ENCODE measurements at regions of chr9 and their contacts with region 1.

Region 1: DNA sequence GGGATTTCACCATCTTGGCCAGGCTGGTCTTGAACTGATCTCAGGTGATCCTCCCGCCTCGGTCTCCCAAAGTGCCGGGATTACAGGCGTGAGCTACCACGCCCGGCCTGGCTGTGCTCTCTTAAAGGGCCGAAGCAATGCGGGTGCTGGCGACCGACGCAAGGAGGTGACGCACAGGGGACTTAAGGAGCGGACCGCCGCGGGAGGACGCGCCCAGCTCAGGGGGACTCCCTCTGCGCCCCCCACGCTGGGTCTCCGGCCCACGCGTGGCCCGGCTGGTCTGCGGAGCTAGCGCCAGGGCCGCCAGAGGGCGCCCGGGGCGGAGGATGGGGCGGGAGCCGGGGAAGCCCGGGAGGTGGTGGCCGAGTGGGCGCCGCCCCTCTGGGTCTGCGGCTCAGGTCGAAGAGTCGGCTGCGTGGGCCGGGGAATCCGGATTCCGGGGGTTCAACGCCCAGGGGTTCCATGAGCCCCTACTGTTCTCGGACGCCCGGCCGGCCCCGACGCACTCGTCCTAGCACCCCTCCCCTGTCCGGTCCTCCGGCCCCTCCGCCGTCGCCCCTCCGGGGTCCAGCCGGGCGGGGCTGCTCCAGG is 502 bp upstream of the CERCAM start:
- DNase-seq: no peak
- ATAC-seq: peak; percentile 93
- H3K4me3 ChIP-seq: peak overlapping the region; percentile 93
- H3K27ac ChIP-seq: no peak overlapping the region
- H3K4me1 ChIP-seq: peaks cover 10% of the 10 kb centered on the region
- H3K27me3 ChIP-seq: peaks cover 7 to 11% of the 10 kb centered on the region in 2 experiments
- CTCF ChIP-seq: peak; percentile 77 to 90 (median 84); a peak in 5 of 6 replicates
- EP300 ChIP-seq: no peak
- POLR2A ChIP-seq: no peak
- RAD21 ChIP-seq: peak; percentile 29; the same call in 1 of the 2 replicates

Region 2: GRCh38 chr9:128370826-128371621 is 49.1 kb before region 1 on chr9 and contains the start of gene URM1:
- CTCF ChIA-PET with region 1: interaction called, 8 read pairs
- POLR2A ChIA-PET with region 1: interaction called, 8 read pairs
- RAD21 ChIA-PET with region 1: interaction called, 11 read pairs
- SMC1A ChIA-PET with region 1: interaction called, 4 read pairs
- in situ Hi-C with region 1: no loop called
- intact Hi-C with region 1: no loop called
- DNase-seq: peak; percentile 73
- ATAC-seq: peak; percentile 98
- H3K4me3 ChIP-seq: peak within 1 kb of the TSS; percentile 99
- H3K27ac ChIP-seq: peak within 1 kb of the TSS; percentile 89
- H3K4me1 ChIP-seq: no peaks in the 10 kb centered on the region
- H3K27me3 ChIP-seq: no peaks in the 10 kb centered on the region
- CTCF ChIP-seq: peak in 1 of 3 experiments; percentile 9; a peak in 1 of 6 replicates
- EP300 ChIP-seq: no peak
- POLR2A ChIP-seq: peak; percentile 90
- RAD21 ChIP-seq: no peak
- polyA plus RNA-seq, gene URM1: 7.9 to 14.1 TPM

Region 3: DNA sequence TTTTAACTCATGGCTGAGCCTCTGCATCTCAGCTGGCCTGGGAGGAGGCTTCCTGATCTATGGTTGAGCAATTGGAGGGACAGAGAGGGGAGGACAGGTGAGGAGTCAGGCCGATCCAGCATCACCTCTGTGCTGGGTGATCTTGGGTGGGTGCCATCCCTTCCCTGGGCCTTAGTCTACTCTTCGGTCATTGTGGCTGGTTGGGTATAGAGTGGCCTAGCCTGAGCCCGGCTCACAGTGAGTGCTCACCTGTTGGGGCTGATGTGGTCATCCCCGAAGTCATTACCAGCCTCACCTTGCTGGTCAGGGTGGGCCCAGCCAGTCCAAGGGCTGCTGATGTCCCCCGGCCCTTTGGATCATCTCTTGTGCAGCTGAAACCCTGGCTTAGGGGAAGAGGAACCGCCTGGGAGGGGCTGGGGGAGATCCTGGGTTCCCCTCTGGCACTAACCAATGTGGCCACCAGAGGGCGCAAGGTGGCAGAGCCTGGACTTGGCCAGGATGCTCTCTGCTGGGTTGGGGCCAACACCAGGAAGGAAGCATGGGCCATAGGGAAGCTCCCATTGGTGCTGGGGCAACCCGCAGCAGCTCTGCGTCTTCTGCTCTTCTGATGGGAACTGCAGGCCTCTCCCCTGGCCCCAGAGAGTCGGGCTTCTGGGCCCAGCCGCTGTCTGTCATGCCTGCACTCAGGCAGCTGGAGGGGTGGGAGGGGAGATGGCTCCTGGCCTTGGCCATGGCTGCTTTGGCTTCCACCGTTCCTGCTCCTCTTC is 18.4 kb after region 1 on chr9:
- CTCF ChIA-PET with region 1: interaction called, 13 read pairs
- POLR2A ChIA-PET with region 1: interaction called, 3 read pairs
- RAD21 ChIA-PET with region 1: interaction called, 9 read pairs
- SMC1A ChIA-PET with region 1: no interaction called
- in situ Hi-C with region 1: no loop called
- intact Hi-C with region 1: no loop called
- DNase-seq: no peak
- ATAC-seq: peak; percentile 99
- H3K4me3 ChIP-seq: no peak overlapping the region
- H3K27ac ChIP-seq: no peak overlapping the region
- H3K4me1 ChIP-seq: no peaks in the 10 kb centered on the region
- H3K27me3 ChIP-seq: no peaks in the 10 kb centered on the region
- CTCF ChIP-seq: peak; percentile 86 to 96 (median 94)
- EP300 ChIP-seq: no peak
- POLR2A ChIP-seq: no peak
- RAD21 ChIP-seq: peak; percentile 72

Measured in GM12878 (cell line).